ENCODE measurements at regions of chr6 and their contacts with region 1.

Region 1: DNA sequence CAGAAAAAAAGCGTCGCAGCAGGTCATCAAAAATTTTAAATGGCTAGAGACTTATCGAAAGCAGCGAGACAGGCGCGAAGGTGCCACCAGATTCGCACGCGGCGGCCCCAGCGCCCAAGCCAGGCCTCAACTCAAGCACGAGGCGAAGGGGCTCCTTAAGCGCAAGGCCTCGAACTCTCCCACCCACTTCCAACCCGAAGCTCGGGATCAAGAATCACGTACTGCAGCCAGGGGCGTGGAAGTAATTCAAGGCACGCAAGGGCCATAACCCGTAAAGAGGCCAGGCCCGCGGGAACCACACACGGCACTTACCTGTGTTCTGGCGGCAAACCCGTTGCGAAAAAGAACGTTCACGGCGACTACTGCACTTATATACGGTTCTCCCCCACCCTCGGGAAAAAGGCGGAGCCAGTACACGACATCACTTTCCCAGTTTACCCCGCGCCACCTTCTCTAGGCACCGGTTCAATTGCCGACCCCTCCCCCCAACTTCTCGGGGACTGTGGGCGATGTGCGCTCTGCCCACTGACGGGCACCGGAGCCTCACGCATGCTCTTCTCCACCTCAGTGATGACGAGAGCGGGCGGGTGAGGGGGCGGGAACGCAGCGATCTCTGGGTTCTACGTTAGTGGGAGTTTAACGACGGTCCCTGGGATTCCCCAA is at the start of gene EEF1A1:
- DNase-seq: peak; percentile 98
- ATAC-seq: peak; percentile 70
- H3K4me3 ChIP-seq: peak within 1 kb of the TSS; percentile 93
- H3K27ac ChIP-seq: peak within 1 kb of the TSS; percentile 99
- H3K4me1 ChIP-seq: peaks cover 34% of the 10 kb centered on the region
- H3K27me3 ChIP-seq: no peaks in the 10 kb centered on the region
- CTCF ChIP-seq: no peak
- total RNA-seq, gene EEF1A1: 5,206 and 6,057 TPM in 2 replicates

Region 2: DNA sequence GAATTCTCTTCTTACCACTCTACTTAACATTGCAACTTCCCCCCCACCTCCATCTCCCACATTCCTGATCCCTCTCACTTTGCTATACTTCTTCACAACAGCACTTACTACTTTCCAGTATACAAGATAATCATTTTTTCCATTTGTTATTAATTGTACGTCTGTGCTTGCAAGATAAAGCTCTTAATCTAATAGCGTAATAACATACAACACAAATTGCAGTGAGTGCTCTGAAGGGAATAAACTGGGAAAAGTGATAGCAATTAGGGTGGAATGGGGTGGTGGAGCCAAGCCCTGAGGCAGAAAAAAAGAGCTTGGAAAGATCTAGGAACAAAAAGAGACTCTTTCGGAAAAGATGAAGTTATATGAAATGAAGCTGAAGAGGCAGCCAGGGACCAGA is 77.3 kb before region 1 on chr6:
- CTCF ChIA-PET with region 1: no interaction called
- POLR2A ChIA-PET with region 1: no interaction called
- intact Hi-C with region 1: no loop called
- DNase-seq: no peak
- ATAC-seq: no peak
- H3K4me3 ChIP-seq: no peak overlapping the region
- H3K27ac ChIP-seq: no peak overlapping the region
- H3K4me1 ChIP-seq: no peaks in the 10 kb centered on the region
- H3K27me3 ChIP-seq: no peaks in the 10 kb centered on the region
- CTCF ChIP-seq: no peak

Region 3: DNA sequence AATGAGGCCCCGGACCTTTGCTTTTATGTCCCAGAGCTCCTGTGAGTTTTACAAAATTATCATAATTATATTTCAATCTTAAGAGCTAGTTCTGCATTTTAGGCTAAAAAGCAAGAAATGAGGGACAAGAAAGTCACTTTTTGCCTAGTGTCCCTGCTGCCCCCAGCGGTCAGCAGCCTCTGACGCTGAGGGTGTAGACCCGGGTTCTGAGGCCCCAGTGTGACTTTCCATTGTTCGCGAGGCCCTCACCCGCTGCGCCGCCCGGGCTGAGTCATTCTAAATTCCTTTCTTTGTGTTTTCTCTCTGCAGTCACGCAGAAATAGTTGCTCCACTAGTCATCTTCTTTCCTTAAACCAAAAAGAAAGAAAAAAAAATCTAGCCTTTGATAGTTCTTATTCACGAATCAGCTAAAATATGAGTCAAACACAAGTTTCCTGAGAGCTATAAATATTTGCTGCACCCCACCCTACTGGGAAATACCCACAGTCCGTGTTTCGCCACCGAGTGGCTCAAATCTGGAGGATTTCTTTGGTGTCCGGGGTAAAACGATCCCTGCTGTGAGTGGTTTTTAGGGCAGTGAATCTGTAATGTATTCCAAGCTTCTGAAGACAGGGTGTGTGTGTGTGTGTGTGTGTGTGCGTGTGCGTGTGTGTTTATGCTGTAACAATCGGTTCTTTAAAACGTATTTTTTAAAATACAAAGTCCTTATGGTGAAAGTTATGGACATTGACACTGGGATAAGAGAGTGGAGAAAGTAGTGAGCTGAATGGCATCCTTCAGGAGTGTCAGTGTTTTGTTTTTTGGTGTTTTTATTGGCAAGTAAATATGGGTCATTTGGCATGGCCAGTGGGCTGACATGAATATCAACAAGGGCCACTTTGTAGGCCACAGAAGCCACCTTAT is 59.7 kb after region 1 on chr6:
- CTCF ChIA-PET with region 1: interaction called, 4 read pairs
- POLR2A ChIA-PET with region 1: interaction called, 51 read pairs
- intact Hi-C with region 1: loop called (anchors 1 kb)
- DNase-seq: peak; percentile 95
- ATAC-seq: peak; percentile 85
- H3K4me3 ChIP-seq: peak overlapping the region; percentile 65
- H3K27ac ChIP-seq: peak overlapping the region; percentile 99
- H3K4me1 ChIP-seq: peaks cover 35% of the 10 kb centered on the region
- H3K27me3 ChIP-seq: no peaks in the 10 kb centered on the region
- CTCF ChIP-seq: peak; percentile 52

Region 4: GRCh38 chr6:73585566-73586415 is 65.0 kb after region 1 on chr6:
- CTCF ChIA-PET with region 1: interaction called, 3 read pairs
- POLR2A ChIA-PET with region 1: interaction called, 51 read pairs
- intact Hi-C with region 1: loop called (anchors 1 kb)
- DNase-seq: peak; percentile 72
- ATAC-seq: peak; percentile 61
- H3K4me3 ChIP-seq: peak overlapping the region; percentile 57
- H3K27ac ChIP-seq: peak overlapping the region; percentile 90
- H3K4me1 ChIP-seq: peaks cover 26% of the 10 kb centered on the region
- H3K27me3 ChIP-seq: no peaks in the 10 kb centered on the region
- CTCF ChIP-seq: no peak

Region 5: GRCh38 chr6:73610444-73611275 is 89.8 kb after region 1 on chr6:
- CTCF ChIA-PET with region 1: no interaction called
- POLR2A ChIA-PET with region 1: interaction called, 11 read pairs
- intact Hi-C with region 1: no loop called
- DNase-seq: peak; percentile 76
- ATAC-seq: peak; percentile 64
- H3K4me3 ChIP-seq: no peak overlapping the region
- H3K27ac ChIP-seq: no peak overlapping the region
- H3K4me1 ChIP-seq: no peaks in the 10 kb centered on the region
- H3K27me3 ChIP-seq: no peaks in the 10 kb centered on the region
- CTCF ChIP-seq: peak; percentile 67

Region 6: DNA sequence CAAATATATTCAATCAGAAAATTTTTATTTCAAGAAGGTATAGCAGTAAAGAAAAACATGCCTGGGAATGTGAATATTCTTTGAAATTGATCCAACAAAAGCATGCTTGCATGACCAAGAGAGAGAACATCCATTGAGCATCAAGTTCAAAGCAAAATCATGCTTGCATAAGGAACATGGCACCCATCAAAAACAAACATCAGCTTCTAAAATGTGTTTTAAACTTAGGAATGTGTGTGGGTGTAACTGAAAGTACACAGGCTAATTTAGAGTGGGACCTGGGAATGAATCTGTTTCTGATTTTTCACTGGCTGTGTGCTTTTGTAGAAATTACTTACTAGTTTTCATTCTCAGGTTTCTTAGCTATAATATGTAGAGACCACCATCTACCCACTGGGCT is 127.4 kb after region 1 on chr6:
- CTCF ChIA-PET with region 1: no interaction called
- POLR2A ChIA-PET with region 1: interaction called, 21 read pairs
- intact Hi-C with region 1: no loop called
- DNase-seq: no peak
- ATAC-seq: no peak
- H3K4me3 ChIP-seq: no peak overlapping the region
- H3K27ac ChIP-seq: no peak overlapping the region
- H3K4me1 ChIP-seq: peaks cover 8% of the 10 kb centered on the region; the same call in 1 of the 2 replicates
- H3K27me3 ChIP-seq: no peaks in the 10 kb centered on the region
- CTCF ChIP-seq: no peak

Region 7: GRCh38 chr6:73653571-73654424 is 133.0 kb after region 1 on chr6 and contains the start of gene SLC17A5:
- CTCF ChIA-PET with region 1: no interaction called
- POLR2A ChIA-PET with region 1: interaction called, 3 read pairs
- intact Hi-C with region 1: loop called (anchors 2 kb)
- DNase-seq: peak; percentile 91
- ATAC-seq: peak; percentile 89
- H3K4me3 ChIP-seq: peak within 1 kb of the TSS; percentile 92
- H3K27ac ChIP-seq: peak within 1 kb of the TSS; percentile 60
- H3K4me1 ChIP-seq: peaks cover 28% of the 10 kb centered on the region
- H3K27me3 ChIP-seq: no peaks in the 10 kb centered on the region
- CTCF ChIP-seq: no peak
- total RNA-seq, gene SLC17A5: 3.3 and 5.2 TPM in 2 replicates